ENCODE measurements at regions of chr15 and their contacts with region 1.

Region 1: GRCh38 chr15:50315814-50316630 is 39.0 kb downstream of the GABPB1 start:
- DNase-seq: no peak
- ATAC-seq: no peak
- H3K4me3 Mint-ChIP-seq: no peak overlapping the region
- H3K27ac Mint-ChIP-seq: no peak overlapping the region
- H3K4me1 Mint-ChIP-seq: peaks cover 25% of the 10 kb centered on the region
- H3K27me3 Mint-ChIP-seq: no peaks in the 10 kb centered on the region

Region 2: GRCh38 chr15:49887659-49888322 is 428.2 kb before region 1 on chr15:
- CTCF ChIA-PET with region 1: no interaction called
- POLR2A ChIA-PET with region 1: no interaction called
- intact Hi-C with region 1: loop called in 1 of 2 experiments (anchors 10 kb)
- DNase-seq: no peak
- ATAC-seq: no peak
- H3K4me3 Mint-ChIP-seq: no peak overlapping the region
- H3K27ac Mint-ChIP-seq: no peak overlapping the region
- H3K4me1 Mint-ChIP-seq: no peaks in the 10 kb centered on the region
- H3K27me3 Mint-ChIP-seq: no peaks in the 10 kb centered on the region

Region 3: GRCh38 chr15:50066192-50066591 is 249.8 kb before region 1 on chr15:
- CTCF ChIA-PET with region 1: no interaction called
- POLR2A ChIA-PET with region 1: no interaction called
- intact Hi-C with region 1: loop called in 1 of 2 experiments (anchors 10 kb)
- DNase-seq: peak; percentile 55
- ATAC-seq: peak; percentile 94
- H3K4me3 Mint-ChIP-seq: no peak overlapping the region
- H3K27ac Mint-ChIP-seq: peak overlapping the region; percentile 44
- H3K4me1 Mint-ChIP-seq: peaks cover 23% of the 10 kb centered on the region
- H3K27me3 Mint-ChIP-seq: peaks cover 18% of the 10 kb centered on the region

Region 4: DNA sequence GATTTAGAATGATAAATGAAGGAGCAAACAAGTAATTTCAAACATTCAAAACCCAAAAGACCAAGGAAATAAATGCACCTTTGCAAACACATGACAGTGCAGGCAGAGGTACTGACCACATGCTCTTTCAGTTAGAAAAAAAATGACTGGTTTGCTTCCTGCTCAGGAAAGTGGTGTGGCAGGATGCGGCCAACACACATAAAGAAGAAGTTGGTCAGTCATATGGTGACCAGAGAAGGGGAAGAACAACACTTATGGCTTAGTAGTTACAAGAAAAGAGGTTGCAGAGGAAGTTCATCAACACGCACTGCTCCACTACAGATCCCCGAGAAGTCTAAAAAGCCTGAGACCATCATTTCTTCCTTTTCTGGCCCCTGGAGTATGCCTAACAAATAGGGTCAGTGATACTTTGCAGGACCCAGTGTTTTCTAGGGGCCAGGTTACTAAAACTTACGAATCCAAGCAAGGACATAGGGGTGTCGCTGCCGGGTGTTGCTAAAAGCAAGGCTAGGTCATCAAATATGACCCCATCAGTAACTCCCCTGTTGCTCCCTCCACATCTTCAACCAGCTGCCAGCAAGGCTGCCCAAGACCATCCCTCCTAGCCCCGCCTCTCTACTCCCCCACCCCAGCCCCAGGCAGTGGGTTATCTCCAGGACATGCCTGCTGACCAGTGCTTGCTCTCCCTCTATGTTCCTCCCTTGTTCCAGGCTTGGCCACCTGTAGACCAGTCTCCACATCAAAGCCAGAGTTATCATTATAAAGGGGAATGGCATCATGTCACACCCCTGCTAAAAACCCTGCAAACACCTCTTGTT is 208.2 kb before region 1 on chr15:
- CTCF ChIA-PET with region 1: no interaction called
- POLR2A ChIA-PET with region 1: no interaction called
- intact Hi-C with region 1: no loop called
- DNase-seq: peak; percentile 53
- ATAC-seq: peak; percentile 85
- H3K4me3 Mint-ChIP-seq: no peak overlapping the region
- H3K27ac Mint-ChIP-seq: peak overlapping the region; percentile 77
- H3K4me1 Mint-ChIP-seq: peaks cover 38% of the 10 kb centered on the region
- H3K27me3 Mint-ChIP-seq: peaks cover 2% of the 10 kb centered on the region

Region 5: GRCh38 chr15:50166216-50166615 is 149.8 kb before region 1 on chr15:
- CTCF ChIA-PET with region 1: no interaction called
- POLR2A ChIA-PET with region 1: no interaction called
- intact Hi-C with region 1: loop called in 1 of 2 experiments (anchors 5 kb)
- DNase-seq: no peak
- ATAC-seq: no peak
- H3K4me3 Mint-ChIP-seq: no peak overlapping the region
- H3K27ac Mint-ChIP-seq: no peak overlapping the region
- H3K4me1 Mint-ChIP-seq: peaks cover 14% of the 10 kb centered on the region
- H3K27me3 Mint-ChIP-seq: peaks cover 24% of the 10 kb centered on the region

Region 6: DNA sequence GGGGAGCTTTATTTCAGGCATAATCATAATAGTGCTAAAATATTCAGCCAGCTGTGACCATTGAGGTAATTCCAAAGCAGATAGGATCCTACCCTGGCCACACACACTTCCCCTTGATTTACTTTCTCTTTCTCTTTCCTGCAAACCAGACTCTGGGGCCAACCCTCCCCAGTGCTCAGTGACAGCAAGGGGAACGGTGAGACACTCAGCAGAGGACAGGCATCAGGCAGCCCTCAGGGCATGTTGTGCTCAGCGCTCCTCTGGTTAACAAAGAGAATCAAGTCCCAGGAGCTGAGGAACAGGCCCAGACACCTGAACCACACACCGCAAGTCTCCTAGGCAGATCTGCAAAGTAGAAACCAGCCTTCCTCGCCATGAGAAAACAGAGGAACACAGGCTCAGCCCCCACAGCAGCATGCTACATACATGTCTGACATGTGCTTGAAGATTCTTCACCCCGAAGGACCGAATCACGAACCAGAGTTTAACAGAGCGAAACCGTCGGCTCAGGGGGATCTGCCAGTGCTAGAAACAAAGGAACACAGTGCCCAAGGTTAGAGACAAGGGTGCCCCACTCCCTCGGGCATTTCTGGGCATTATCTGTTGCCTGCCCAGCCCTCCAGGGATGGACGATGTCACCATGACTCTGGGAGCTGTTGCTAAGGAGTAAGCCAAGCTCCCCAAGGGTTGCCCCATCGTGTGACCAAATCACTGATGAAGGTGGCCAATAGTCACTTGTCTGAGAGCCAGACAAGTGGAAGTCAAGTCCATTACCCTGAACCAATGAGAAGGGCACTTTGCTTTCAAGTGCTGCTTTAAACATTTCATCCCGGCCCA is 68.0 kb before region 1 on chr15:
- CTCF ChIA-PET with region 1: interaction called, 12 read pairs
- POLR2A ChIA-PET with region 1: no interaction called
- intact Hi-C with region 1: no loop called
- DNase-seq: peak; percentile 83
- ATAC-seq: peak; percentile 99
- H3K4me3 Mint-ChIP-seq: peak overlapping the region; percentile 67
- H3K27ac Mint-ChIP-seq: peak overlapping the region; percentile 96
- H3K4me1 Mint-ChIP-seq: peaks cover 33% of the 10 kb centered on the region
- H3K27me3 Mint-ChIP-seq: no peaks in the 10 kb centered on the region

Region 7: GRCh38 chr15:50298340-50298739 is 17.7 kb before region 1 on chr15:
- CTCF ChIA-PET with region 1: interaction called, 12 read pairs
- POLR2A ChIA-PET with region 1: no interaction called
- intact Hi-C with region 1: no loop called
- DNase-seq: no peak
- ATAC-seq: no peak
- H3K4me3 Mint-ChIP-seq: no peak overlapping the region
- H3K27ac Mint-ChIP-seq: no peak overlapping the region
- H3K4me1 Mint-ChIP-seq: no peaks in the 10 kb centered on the region
- H3K27me3 Mint-ChIP-seq: no peaks in the 10 kb centered on the region

Region 8: GRCh38 chr15:50380089-50380488 is 64.1 kb after region 1 on chr15:
- CTCF ChIA-PET with region 1: no interaction called
- POLR2A ChIA-PET with region 1: no interaction called
- intact Hi-C with region 1: no loop called
- DNase-seq: no peak
- ATAC-seq: no peak
- H3K4me3 Mint-ChIP-seq: no peak overlapping the region
- H3K27ac Mint-ChIP-seq: no peak overlapping the region
- H3K4me1 Mint-ChIP-seq: peaks cover 19% of the 10 kb centered on the region
- H3K27me3 Mint-ChIP-seq: no peaks in the 10 kb centered on the region